Tibial artery (tissue), 4 donors: ENCODE measurements at regions of chr20 and their contacts with region 1.

Region 1: DNA sequence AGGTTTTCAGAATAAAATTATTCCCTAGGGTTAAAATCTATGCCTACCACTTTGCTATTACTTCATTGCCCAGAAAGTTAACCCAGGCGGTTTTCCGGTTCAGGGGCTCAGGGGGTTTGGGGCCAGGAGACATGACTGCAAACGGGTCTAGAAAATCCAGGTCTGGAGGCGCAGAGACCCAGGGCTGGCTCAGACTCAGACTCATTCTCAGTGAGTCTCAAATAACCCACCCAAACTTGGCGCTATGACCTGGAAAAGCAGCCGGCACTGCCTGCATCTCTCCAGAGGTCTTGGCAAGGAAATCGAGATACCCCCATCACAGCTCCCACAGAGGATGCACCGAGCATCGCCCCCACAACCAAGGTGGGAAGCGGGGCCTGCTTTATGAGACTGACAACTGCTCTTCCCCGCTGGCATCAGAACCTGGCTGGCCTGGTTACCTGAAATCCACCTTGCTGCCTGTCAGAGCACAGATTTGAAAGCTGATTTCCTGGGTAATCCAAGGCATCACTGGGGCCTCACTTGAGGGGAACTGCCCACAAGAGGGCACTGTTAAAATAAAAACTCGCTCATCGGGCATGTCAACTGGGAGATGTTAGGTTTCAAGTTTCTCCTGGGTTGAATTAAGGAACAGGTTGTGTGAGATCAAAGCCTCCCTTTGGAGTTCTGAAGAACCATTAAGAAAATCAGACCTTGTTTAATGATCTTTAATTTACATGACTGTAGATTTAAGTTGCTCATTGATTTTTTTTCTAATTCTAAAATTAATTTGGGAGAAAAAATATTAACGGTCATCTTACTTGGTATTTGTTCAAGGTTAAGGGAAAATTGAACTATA is 55.1 kb downstream of the KIF16B start:
- DNase-seq: no peak
- H3K4me3 ChIP-seq: no peak overlapping the region
- H3K27ac ChIP-seq: no peak overlapping the region
- H3K4me1 ChIP-seq: no peaks in the 10 kb centered on the region
- H3K27me3 ChIP-seq: no peaks in the 10 kb centered on the region
- CTCF ChIP-seq: peak; percentile 24 to 28

Region 2: DNA sequence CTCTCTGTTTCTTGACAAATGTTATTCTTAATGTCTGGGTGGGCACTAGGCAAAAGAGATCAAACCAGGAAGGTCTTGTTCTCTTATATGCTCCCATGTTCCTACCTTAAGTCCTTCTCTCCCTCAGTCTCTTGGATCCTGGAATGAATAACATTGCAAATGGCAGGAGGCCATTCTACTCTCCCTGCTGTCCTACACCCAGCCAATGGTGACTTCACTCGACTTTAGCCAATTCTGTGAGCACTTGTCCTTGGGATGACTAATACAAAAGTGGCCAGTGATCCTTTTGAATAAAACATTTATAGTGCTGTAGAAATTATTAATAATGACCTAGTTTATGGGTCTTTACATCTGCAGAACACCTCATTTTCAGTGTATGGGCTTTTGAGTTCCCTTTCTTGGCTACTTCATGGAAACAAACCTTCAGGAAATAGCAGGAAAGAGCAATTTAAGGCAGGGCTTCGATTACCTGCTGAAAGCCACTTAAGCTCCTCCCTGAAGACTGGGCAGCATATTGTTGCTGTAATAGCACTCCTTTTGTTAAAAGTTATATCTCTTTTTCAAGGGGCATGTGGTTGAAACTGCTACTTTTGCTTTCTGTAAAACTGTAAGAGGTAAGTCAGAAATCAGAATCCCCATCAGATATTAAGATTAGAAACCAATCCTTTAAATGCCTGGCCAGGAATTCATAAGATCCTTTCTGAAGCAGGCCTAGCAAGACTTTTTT is 240.5 kb after region 1 on chr20:
- intact Hi-C with region 1: loop called (anchors 10 kb)
- DNase-seq: no peak
- H3K4me3 ChIP-seq: no peak overlapping the region
- H3K27ac ChIP-seq: no peak overlapping the region
- H3K4me1 ChIP-seq: no peaks in the 10 kb centered on the region
- H3K27me3 ChIP-seq: peaks cover 0 to 4% of the 10 kb centered on the region in 2 donors
- CTCF ChIP-seq: no peak

Region 3: GRCh38 chr20:17059465-17059864 is 541.3 kb after region 1 on chr20:
- intact Hi-C with region 1: no loop called
- DNase-seq: no peak
- H3K4me3 ChIP-seq: no peak overlapping the region
- H3K27ac ChIP-seq: no peak overlapping the region
- H3K4me1 ChIP-seq: no peaks in the 10 kb centered on the region
- H3K27me3 ChIP-seq: no peaks in the 10 kb centered on the region
- CTCF ChIP-seq: no peak